ENCODE measurements at regions of chr11 and their contacts with region 1.

Region 1: GRCh38 chr11:125141686-125142535 is 22.6 kb upstream of the PKNOX2 start:
- DNase-seq: peak; percentile 15 to 79 (median 62)
- ATAC-seq: peak; percentile 99
- H3K4me3 ChIP-seq: no peak overlapping the region
- H3K4me3 Mint-ChIP-seq: no peak overlapping the region
- H3K27ac ChIP-seq: no peak overlapping the region
- H3K27ac Mint-ChIP-seq: no peak overlapping the region
- H3K4me1 ChIP-seq: peaks cover 5% of the 10 kb centered on the region
- H3K4me1 Mint-ChIP-seq: peaks cover 5% of the 10 kb centered on the region
- H3K27me3 ChIP-seq: peaks cover 2 to 3% of the 10 kb centered on the region in 2 experiments
- H3K27me3 Mint-ChIP-seq: peaks cover 44% of the 10 kb centered on the region
- CTCF ChIP-seq: peak; percentile 99

Region 2: DNA sequence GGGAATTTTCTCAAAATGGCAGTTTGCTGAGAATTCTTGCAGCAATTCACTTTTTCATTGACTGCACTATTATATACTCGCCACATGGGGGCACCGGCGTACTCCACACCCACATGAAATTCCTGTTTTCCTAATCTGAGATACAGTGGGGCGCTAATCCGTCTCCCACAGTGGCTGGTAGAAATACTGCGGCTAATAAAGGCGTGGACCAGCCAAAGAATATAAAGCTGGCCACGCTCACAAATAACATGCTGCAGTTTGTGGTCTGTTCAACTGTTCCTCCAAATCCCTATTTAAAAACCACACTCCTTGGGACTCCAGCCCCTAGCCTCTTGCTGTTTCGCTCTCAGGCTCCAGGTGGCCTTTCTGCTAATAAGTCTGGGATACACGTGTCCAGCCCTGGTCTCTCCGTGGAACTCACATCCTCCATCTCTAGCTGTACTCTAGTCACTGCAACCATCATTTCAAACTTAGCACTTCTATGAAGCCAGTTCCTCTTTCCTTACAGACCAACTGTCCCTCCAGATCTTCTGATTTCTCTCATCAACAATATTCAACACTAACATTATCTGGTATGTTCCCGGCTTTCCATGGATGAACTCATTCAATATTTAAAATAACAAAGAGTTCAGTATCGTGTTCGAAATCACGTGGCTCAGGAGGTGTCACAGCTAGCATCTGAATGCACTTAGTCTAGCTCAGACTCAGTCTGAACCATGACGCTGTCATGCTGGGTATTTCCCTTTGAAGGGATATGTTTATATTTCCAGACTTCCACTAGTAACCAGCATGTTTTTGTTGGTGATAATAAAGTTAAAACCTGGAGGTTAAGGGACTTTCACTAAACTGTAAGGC is 497.3 kb before region 1 on chr11:
- CTCF ChIA-PET with region 1: no interaction called
- POLR2A ChIA-PET with region 1: no interaction called
- intact Hi-C with region 1: loop called in 1 of 2 experiments (anchors 10 kb)
- DNase-seq: peak in 6 of 9 experiments; percentile 4 to 67 (median 44)
- ATAC-seq: peak; percentile 79
- H3K4me3 ChIP-seq: no peak overlapping the region
- H3K4me3 Mint-ChIP-seq: no peak overlapping the region
- H3K27ac ChIP-seq: no peak overlapping the region
- H3K27ac Mint-ChIP-seq: no peak overlapping the region
- H3K4me1 ChIP-seq: no peaks in the 10 kb centered on the region
- H3K4me1 Mint-ChIP-seq: no peaks in the 10 kb centered on the region
- H3K27me3 ChIP-seq: no peaks in the 10 kb centered on the region
- H3K27me3 Mint-ChIP-seq: no peaks in the 10 kb centered on the region
- CTCF ChIP-seq: peak; percentile 79

Region 3: GRCh38 chr11:124961972-124962609 is 179.8 kb before region 1 on chr11:
- CTCF ChIA-PET with region 1: interaction called, 65 read pairs
- POLR2A ChIA-PET with region 1: no interaction called
- intact Hi-C with region 1: loop called (anchors 1 kb)
- DNase-seq: peak in 3 of 9 experiments; percentile 12 to 82 (median 75)
- ATAC-seq: peak; percentile 99
- H3K4me3 ChIP-seq: no peak overlapping the region
- H3K4me3 Mint-ChIP-seq: no peak overlapping the region
- H3K27ac ChIP-seq: no peak overlapping the region
- H3K27ac Mint-ChIP-seq: no peak overlapping the region
- H3K4me1 ChIP-seq: no peaks in the 10 kb centered on the region
- H3K4me1 Mint-ChIP-seq: no peaks in the 10 kb centered on the region
- H3K27me3 ChIP-seq: no peaks in the 10 kb centered on the region
- H3K27me3 Mint-ChIP-seq: no peaks in the 10 kb centered on the region
- CTCF ChIP-seq: peak; percentile 89

Region 4: GRCh38 chr11:125117429-125117828 is 24.5 kb before region 1 on chr11:
- CTCF ChIA-PET with region 1: interaction called, 13 read pairs
- POLR2A ChIA-PET with region 1: no interaction called
- intact Hi-C with region 1: no loop called
- DNase-seq: no peak
- ATAC-seq: no peak
- H3K4me3 ChIP-seq: no peak overlapping the region
- H3K4me3 Mint-ChIP-seq: no peak overlapping the region
- H3K27ac ChIP-seq: no peak overlapping the region
- H3K27ac Mint-ChIP-seq: no peak overlapping the region
- H3K4me1 ChIP-seq: no peaks in the 10 kb centered on the region
- H3K4me1 Mint-ChIP-seq: no peaks in the 10 kb centered on the region
- H3K27me3 ChIP-seq: no peaks in the 10 kb centered on the region
- H3K27me3 Mint-ChIP-seq: peaks cover 9% of the 10 kb centered on the region
- CTCF ChIP-seq: no peak